Right cardiac atrium (tissue), 5 donors: ENCODE measurements at regions of chr15 and their contacts with region 1.

Region 1: GRCh38 chr15:91852741-91853510 is 582 bp upstream of the SLCO3A1 start:
- DNase-seq: peak; percentile 85 to 93 (median 92)
- ATAC-seq: peak; percentile 88 to 90
- H3K4me3 ChIP-seq: peak overlapping the region; percentile 81
- H3K27ac ChIP-seq: peak overlapping the region; percentile 94
- H3K4me1 ChIP-seq: peaks cover 22% of the 10 kb centered on the region
- H3K27me3 ChIP-seq: no peaks in the 10 kb centered on the region

Region 2: GRCh38 chr15:91302588-91303439 is 550.1 kb before region 1 on chr15:
- intact Hi-C with region 1: loop called (anchors 5 to 10 kb)
- DNase-seq: peak in 2 of 3 donors; percentile 39 to 50
- ATAC-seq: peak; percentile 77 to 88
- H3K4me3 ChIP-seq: no peak overlapping the region
- H3K27ac ChIP-seq: no peak overlapping the region
- H3K4me1 ChIP-seq: no peaks in the 10 kb centered on the region
- H3K27me3 ChIP-seq: no peaks in the 10 kb centered on the region

Region 3: DNA sequence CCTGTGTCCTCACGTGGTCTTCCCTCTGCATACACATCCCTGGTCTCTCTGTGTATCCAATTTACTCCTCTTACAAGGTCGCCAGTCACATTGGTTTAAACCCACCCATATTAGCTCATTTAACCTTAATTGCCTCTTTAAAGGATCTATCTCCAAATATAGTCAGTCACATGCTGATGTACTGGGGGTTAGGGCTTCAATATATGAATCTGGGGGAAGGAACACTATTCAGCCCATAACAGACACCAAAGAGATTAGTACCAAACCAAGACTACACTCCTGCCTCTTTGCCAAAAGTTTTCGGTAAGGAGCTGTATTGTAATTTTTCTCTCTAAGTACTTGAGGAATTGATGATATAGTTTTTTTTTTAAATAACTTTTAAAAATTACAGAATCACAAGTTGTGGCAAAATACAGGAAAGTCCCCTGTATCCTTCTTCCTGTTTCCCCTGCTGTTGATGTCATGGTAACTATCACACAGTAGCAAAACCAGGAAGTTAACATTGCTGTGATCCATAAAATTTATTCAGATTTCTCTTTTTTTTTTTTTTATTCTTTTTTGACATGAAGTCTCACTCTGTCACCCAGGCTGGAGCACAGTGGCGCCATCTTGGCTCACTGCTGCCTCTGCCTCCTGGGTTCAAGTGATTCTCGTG is 68.4 kb after region 1 on chr15:
- intact Hi-C with region 1: loop called in 1 of 4 experiments (anchors 10 kb)
- DNase-seq: no peak
- ATAC-seq: peak in 1 of 2 donors; percentile 20
- H3K4me3 ChIP-seq: no peak overlapping the region
- H3K27ac ChIP-seq: peak overlapping the region; percentile 33
- H3K4me1 ChIP-seq: peaks cover 21% of the 10 kb centered on the region
- H3K27me3 ChIP-seq: no peaks in the 10 kb centered on the region